ENCODE measurements at regions of chr12 and their contacts with region 1.

Region 1: GRCh38 chr12:110742718-110743570 is at the start of gene PPP1CC:
- DNase-seq: peak; percentile 97
- ATAC-seq: peak; percentile 98
- H3K4me3 ChIP-seq: peak within 1 kb of the TSS; percentile 83 to 89
- H3K27ac ChIP-seq: peak within 1 kb of the TSS in 1 of 2 donors; percentile 72
- H3K4me1 ChIP-seq: peaks cover 0 to 2% of the 10 kb centered on the region in 2 donors
- H3K27me3 ChIP-seq: no peaks in the 10 kb centered on the region
- total RNA-seq, gene PPP1CC: 73.8 to 85.8 TPM

Region 2: GRCh38 chr12:110639336-110640141 is 103.4 kb before region 1 on chr12:
- intact Hi-C with region 1: loop called in 1 of 2 experiments (anchors 5 kb)
- DNase-seq: no peak
- ATAC-seq: no peak
- H3K4me3 ChIP-seq: no peak overlapping the region
- H3K27ac ChIP-seq: no peak overlapping the region
- H3K4me1 ChIP-seq: peaks cover 0 to 2% of the 10 kb centered on the region in 2 donors
- H3K27me3 ChIP-seq: no peaks in the 10 kb centered on the region

Region 3: GRCh38 chr12:110677206-110677911 is 65.6 kb before region 1 on chr12:
- intact Hi-C with region 1: no loop called
- DNase-seq: no peak
- ATAC-seq: peak; percentile 19
- H3K4me3 ChIP-seq: no peak overlapping the region
- H3K27ac ChIP-seq: no peak overlapping the region
- H3K4me1 ChIP-seq: no peaks in the 10 kb centered on the region
- H3K27me3 ChIP-seq: no peaks in the 10 kb centered on the region

Region 4: GRCh38 chr12:110704748-110705147 is 38.2 kb before region 1 on chr12:
- intact Hi-C with region 1: no loop called
- DNase-seq: no peak
- ATAC-seq: no peak
- H3K4me3 ChIP-seq: no peak overlapping the region
- H3K27ac ChIP-seq: no peak overlapping the region
- H3K4me1 ChIP-seq: no peaks in the 10 kb centered on the region
- H3K27me3 ChIP-seq: no peaks in the 10 kb centered on the region

Region 5: DNA sequence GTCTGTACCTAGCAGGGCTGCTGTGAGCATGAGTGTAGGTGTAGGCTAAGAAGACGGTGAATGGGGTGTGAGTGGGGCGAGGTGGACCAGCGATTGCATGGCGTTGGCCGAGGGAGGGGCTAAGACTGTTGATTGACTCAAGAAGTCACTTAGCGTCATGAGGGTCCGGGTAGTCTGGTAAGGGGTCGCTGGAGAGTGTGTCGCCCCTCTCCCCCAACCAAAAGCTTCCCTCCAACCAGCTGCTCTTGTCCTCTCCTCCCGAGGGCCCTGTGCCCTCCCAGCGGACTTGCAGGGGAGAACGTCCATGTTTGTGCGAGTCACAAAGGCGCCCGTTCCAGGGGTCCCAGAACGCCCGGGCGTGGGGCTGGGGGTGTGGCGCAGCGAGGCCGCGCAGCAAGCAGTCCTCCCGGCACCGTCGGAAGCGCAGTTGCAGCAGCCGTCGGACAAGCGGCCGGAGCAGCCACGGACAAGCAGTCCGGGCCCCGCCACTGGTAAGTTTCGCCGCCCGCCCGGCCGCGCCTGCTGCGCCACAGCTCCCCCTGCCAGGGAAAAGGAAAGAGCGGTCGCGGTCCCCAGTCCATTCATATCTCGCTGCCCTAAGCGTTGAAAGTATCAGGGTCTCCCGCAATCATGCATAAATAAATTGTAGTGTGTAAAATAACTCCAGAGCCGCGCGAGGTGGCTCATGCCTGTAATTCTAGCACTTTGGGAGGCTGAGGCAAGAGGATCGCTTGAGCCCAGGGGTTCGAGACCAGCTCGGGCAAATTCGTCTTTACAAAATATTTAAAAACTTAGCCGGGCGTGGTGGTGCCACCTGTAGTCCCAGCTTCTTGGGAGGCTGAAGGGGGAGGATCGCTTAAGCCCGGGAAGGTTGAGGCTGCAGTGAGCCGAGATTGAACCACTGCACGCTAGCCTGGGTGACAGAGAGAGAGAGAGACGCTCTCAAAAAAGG is 103.9 kb after region 1 on chr12 and contains the start of gene CCDC63:
- intact Hi-C with region 1: loop called in 1 of 2 experiments (anchors 10 kb)
- DNase-seq: peak; percentile 76 to 88
- ATAC-seq: peak; percentile 51
- H3K4me3 ChIP-seq: no peak within 1 kb of the TSS
- H3K27ac ChIP-seq: no peak within 1 kb of the TSS
- H3K4me1 ChIP-seq: no peaks in the 10 kb centered on the region
- H3K27me3 ChIP-seq: no peaks in the 10 kb centered on the region
- total RNA-seq, gene CCDC63: not detected

Measured in aorta (tissue), 5 donors.